PC-3 (cell line): ENCODE measurements at regions of chr4 and their contacts with region 1.

Region 1: GRCh38 chr4:25299480-25300188 is 12.9 kb upstream of the ZCCHC4 start:
- DNase-seq: peak; percentile 83
- ATAC-seq: peak; percentile 89
- H3K4me3 ChIP-seq: peak overlapping the region; percentile 52
- H3K27ac ChIP-seq: peak overlapping the region; percentile 55; the same call in 1 of the 2 replicates
- H3K4me1 ChIP-seq: peaks cover 13% of the 10 kb centered on the region
- H3K27me3 ChIP-seq: no peaks in the 10 kb centered on the region
- CTCF ChIP-seq: peak; percentile 30; the same call in 1 of the 2 replicates

Region 2: DNA sequence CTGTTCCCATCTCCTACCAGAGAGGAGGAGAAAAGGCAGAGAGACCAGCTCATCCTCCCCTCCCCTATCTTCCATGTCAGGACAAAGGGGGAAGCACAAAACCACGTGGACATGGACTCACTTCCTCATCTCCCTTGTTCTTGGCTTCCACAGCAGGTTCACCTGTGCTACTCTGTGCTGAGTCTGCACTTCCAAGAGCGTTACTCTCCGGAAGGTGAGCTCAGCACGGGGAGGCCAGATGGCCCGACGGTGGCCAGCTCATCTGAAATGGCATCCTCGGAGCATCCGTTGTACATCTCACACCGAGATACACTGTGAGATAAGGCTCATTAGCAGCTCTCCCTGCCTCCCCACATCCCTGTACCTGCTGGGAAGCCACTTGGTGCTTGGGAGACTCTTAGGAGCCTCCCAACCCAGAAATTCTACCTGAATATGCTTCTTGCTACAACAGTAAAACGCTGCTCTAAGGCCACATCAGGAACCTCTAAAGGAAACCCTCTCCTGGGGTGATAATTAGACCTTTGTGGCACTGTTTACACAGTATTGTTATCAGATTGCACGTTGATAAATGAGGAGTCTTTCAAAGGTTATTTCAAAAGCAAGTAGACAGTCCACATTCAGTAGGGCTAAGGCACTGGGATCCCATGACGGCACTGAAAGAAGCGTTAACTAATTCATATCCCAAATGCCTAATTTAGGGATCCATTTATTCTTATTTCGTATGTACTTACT is 288.3 kb before region 1 on chr4:
- CTCF ChIA-PET with region 1: no interaction called
- POLR2A ChIA-PET with region 1: interaction called, 15 read pairs
- intact Hi-C with region 1: no loop called
- DNase-seq: no peak
- ATAC-seq: no peak
- H3K4me3 ChIP-seq: no peak overlapping the region
- H3K27ac ChIP-seq: no peak overlapping the region
- H3K4me1 ChIP-seq: no peaks in the 10 kb centered on the region
- H3K27me3 ChIP-seq: no peaks in the 10 kb centered on the region
- CTCF ChIP-seq: no peak

Region 3: GRCh38 chr4:25234390-25235370 is 65.0 kb before region 1 on chr4:
- CTCF ChIA-PET with region 1: no interaction called
- POLR2A ChIA-PET with region 1: no interaction called
- intact Hi-C with region 1: no loop called
- DNase-seq: peak; percentile 78
- ATAC-seq: peak; percentile 64
- H3K4me3 ChIP-seq: peak overlapping the region; percentile 88
- H3K27ac ChIP-seq: peak overlapping the region; percentile 29
- H3K4me1 ChIP-seq: no peaks in the 10 kb centered on the region
- H3K27me3 ChIP-seq: no peaks in the 10 kb centered on the region
- CTCF ChIP-seq: peak; percentile 53; the same call in 1 of the 2 replicates

Region 4: GRCh38 chr4:25253071-25253445 is 46.6 kb before region 1 on chr4:
- CTCF ChIA-PET with region 1: no interaction called
- POLR2A ChIA-PET with region 1: no interaction called
- intact Hi-C with region 1: no loop called
- DNase-seq: peak; percentile 14
- ATAC-seq: no peak
- H3K4me3 ChIP-seq: no peak overlapping the region
- H3K27ac ChIP-seq: no peak overlapping the region
- H3K4me1 ChIP-seq: no peaks in the 10 kb centered on the region
- H3K27me3 ChIP-seq: no peaks in the 10 kb centered on the region
- CTCF ChIP-seq: no peak